ENCODE measurements at regions of chr7 and their contacts with region 1.

Region 1: GRCh38 chr7:45917658-45918057 is 3.4 kb downstream of the IGFBP3 start:
- DNase-seq: peak; percentile 75
- ATAC-seq: peak; percentile 61
- H3K4me3 ChIP-seq: no peak overlapping the region
- H3K4me3 Mint-ChIP-seq: no peak overlapping the region
- H3K27ac ChIP-seq: no peak overlapping the region
- H3K27ac Mint-ChIP-seq: no peak overlapping the region
- H3K4me1 ChIP-seq: peaks cover 16 to 17% of the 10 kb centered on the region in 2 donors
- H3K4me1 Mint-ChIP-seq: peaks cover 17% of the 10 kb centered on the region
- H3K27me3 ChIP-seq: peaks cover 0 to 50% (median 35%) of the 10 kb centered on the region in 4 experiments
- H3K27me3 Mint-ChIP-seq: peaks cover 56% of the 10 kb centered on the region
- CTCF ChIP-seq: peak; percentile 90

Region 2: GRCh38 chr7:47088329-47089067 is 1170.8 kb after region 1 on chr7:
- CTCF ChIA-PET with region 1: interaction called, 7 read pairs
- POLR2A ChIA-PET with region 1: no interaction called
- intact Hi-C with region 1: loop called (anchors 1 kb)
- DNase-seq: peak; percentile 50
- ATAC-seq: peak; percentile 39
- H3K4me3 ChIP-seq: no peak overlapping the region
- H3K4me3 Mint-ChIP-seq: no peak overlapping the region
- H3K27ac ChIP-seq: no peak overlapping the region
- H3K27ac Mint-ChIP-seq: no peak overlapping the region
- H3K4me1 ChIP-seq: peaks cover 0 to 6% of the 10 kb centered on the region in 2 donors
- H3K4me1 Mint-ChIP-seq: no peaks in the 10 kb centered on the region
- H3K27me3 ChIP-seq: no peaks in the 10 kb centered on the region
- H3K27me3 Mint-ChIP-seq: peaks cover 5% of the 10 kb centered on the region
- CTCF ChIP-seq: peak; percentile 85

Region 3: DNA sequence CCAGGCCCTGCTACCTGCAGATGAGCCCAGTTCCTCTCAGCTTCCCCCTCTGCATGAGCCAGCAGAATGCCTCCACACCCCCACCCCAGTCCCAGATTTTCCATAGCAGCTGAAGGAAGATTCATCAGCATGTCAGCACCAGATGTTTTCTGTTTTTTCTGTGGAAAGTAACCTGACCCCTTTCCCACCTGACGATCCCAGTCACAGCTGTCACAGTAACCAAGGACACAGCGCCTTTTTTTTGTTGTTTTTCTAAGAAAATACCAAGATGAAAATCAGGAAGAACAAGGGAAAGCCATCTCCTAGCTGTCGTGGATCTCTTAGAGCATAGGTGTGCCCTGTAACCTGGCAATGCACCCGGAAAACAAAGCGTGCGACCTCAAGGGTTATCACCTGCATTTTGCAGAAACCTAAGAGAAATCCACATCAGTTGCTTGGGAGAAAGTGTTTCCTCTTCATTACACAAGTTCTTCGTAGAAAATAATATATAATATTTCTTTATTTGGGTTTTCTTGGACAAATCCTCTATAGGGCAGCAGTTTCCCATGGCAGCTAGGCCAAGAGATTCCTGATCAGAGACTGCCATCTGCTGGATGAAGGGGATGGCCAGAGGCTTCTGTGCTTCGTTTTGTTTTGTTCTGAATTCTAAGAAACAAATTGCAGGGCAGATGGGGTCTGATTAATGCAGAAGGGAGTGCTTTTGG is 1262.3 kb after region 1 on chr7:
- CTCF ChIA-PET with region 1: interaction called, 46 read pairs
- POLR2A ChIA-PET with region 1: no interaction called
- intact Hi-C with region 1: no loop called
- DNase-seq: peak; percentile 68
- ATAC-seq: no peak
- H3K4me3 ChIP-seq: no peak overlapping the region
- H3K4me3 Mint-ChIP-seq: no peak overlapping the region
- H3K27ac ChIP-seq: no peak overlapping the region
- H3K27ac Mint-ChIP-seq: no peak overlapping the region
- H3K4me1 ChIP-seq: peaks cover 0 to 8% of the 10 kb centered on the region in 2 donors
- H3K4me1 Mint-ChIP-seq: peaks cover 8% of the 10 kb centered on the region
- H3K27me3 ChIP-seq: peaks cover 0 to 2% (median 0%) of the 10 kb centered on the region in 4 experiments
- H3K27me3 Mint-ChIP-seq: peaks cover 17% of the 10 kb centered on the region
- CTCF ChIP-seq: peak; percentile 75

Region 4: DNA sequence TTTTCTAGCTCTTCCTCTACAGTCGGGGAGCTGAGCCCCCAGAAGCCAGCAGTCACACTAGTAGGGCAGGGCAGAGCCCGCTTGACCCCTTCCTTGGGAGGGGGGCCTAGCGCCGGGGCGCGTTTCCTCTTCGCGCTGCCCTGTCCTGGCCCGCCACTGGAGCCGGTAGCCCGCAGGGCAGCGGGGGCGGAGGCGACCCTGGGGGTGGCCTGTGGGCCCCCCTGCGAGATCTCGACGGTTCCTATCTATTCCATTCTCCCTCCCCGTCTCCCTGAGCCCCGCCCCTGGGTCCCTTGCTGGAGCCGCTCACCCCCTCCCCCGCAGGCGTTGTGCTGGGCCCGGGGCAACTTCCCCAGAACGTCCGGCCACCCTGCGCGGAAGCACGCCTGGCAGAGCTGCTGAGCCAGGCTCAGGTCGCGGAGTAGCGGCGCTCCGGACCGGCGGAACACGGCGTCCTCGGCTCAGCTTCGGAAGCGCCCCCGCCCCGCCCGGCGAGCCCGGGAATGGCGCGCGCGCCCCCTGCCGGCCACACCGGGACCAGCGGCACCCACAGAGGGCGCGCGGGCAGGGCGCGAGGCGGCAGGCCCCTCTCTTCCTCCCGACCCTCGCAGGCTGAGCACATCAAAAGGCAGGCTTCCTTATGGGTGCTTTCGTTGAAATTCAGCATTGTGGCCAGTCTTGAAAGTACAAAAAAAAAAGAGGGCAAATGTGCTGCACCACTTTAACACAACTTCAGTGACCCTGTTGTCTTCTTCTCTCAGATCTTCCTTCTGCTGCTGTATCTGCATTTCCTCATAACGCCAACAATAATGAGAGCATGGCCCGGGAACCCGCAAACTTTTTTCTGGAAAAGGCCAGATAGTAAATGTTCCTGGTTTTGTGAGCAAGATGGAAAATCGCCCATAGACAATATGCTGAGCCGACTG is 1336.7 kb after region 1 on chr7:
- CTCF ChIA-PET with region 1: interaction called, 13 read pairs
- POLR2A ChIA-PET with region 1: no interaction called
- intact Hi-C with region 1: loop called (anchors 1 kb)
- DNase-seq: peak; percentile 81
- ATAC-seq: peak; percentile 85
- H3K4me3 ChIP-seq: peak overlapping the region; percentile 5 to 65 (median 48)
- H3K4me3 Mint-ChIP-seq: peak overlapping the region; percentile 88
- H3K27ac ChIP-seq: peak overlapping the region in 1 of 2 donors; percentile 45
- H3K27ac Mint-ChIP-seq: peak overlapping the region; percentile 73
- H3K4me1 ChIP-seq: peaks cover 16 to 24% of the 10 kb centered on the region in 2 donors
- H3K4me1 Mint-ChIP-seq: peaks cover 25% of the 10 kb centered on the region
- H3K27me3 ChIP-seq: no peaks in the 10 kb centered on the region
- H3K27me3 Mint-ChIP-seq: peaks cover 5% of the 10 kb centered on the region
- CTCF ChIP-seq: peak; percentile 87

Measured in B cell (primary cell).